ENCODE measurements at regions of chr2 and their contacts with region 1.

Region 1: GRCh38 chr2:113240150-113240862 is 38.4 kb downstream of the PAX8 start:
- DNase-seq: peak; percentile 74 to 87
- ATAC-seq: peak; percentile 69
- H3K4me3 ChIP-seq: 0 out of 3 replicates have a peak overlapping the region, but pooled peaks have one; percentile 1
- H3K27ac ChIP-seq: peak overlapping the region; percentile 97 to 98
- H3K4me1 ChIP-seq: peaks cover 50% of the 10 kb centered on the region
- CTCF ChIP-seq: no peak
- EP300 ChIP-seq: peak; percentile 14 to 49; a peak in 3 of 5 replicates
- POLR2A ChIP-seq: no peak; the same call in 1 of the 2 replicates
- RAD21 ChIP-seq: no peak

Region 2: GRCh38 chr2:113211226-113212105 is 28.8 kb before region 1 on chr2:
- CTCF ChIA-PET with region 1: interaction called, 118 read pairs
- POLR2A ChIA-PET with region 1: interaction called, 10 read pairs
- DNase-seq: peak; percentile 77 to 95
- ATAC-seq: peak; percentile 80 to 86
- H3K4me3 ChIP-seq: peak overlapping the region; percentile 19; the same call in 2 of the 3 replicates
- H3K27ac ChIP-seq: peak overlapping the region; percentile 96
- H3K4me1 ChIP-seq: peaks cover 75% of the 10 kb centered on the region
- CTCF ChIP-seq: no peak
- EP300 ChIP-seq: peak; percentile 17 to 28; a peak in 1 of 5 replicates
- POLR2A ChIP-seq: no peak
- RAD21 ChIP-seq: 0 out of 5 replicates have a peak, but pooled peaks have one; percentile 2 to 15

Measured in A549 (cell line).